ENCODE measurements at regions of chr3 and their contacts with region 1.

Region 1: GRCh38 chr3:141311496-141312353 is 56.6 kb upstream of the ZBTB38 start:
- DNase-seq: peak; percentile 97
- H3K4me3 Mint-ChIP-seq: peak overlapping the region; percentile 95
- H3K27ac Mint-ChIP-seq: peak overlapping the region; percentile 98
- H3K4me1 Mint-ChIP-seq: peaks cover 51% of the 10 kb centered on the region
- H3K27me3 Mint-ChIP-seq: no peaks in the 10 kb centered on the region

Region 2: DNA sequence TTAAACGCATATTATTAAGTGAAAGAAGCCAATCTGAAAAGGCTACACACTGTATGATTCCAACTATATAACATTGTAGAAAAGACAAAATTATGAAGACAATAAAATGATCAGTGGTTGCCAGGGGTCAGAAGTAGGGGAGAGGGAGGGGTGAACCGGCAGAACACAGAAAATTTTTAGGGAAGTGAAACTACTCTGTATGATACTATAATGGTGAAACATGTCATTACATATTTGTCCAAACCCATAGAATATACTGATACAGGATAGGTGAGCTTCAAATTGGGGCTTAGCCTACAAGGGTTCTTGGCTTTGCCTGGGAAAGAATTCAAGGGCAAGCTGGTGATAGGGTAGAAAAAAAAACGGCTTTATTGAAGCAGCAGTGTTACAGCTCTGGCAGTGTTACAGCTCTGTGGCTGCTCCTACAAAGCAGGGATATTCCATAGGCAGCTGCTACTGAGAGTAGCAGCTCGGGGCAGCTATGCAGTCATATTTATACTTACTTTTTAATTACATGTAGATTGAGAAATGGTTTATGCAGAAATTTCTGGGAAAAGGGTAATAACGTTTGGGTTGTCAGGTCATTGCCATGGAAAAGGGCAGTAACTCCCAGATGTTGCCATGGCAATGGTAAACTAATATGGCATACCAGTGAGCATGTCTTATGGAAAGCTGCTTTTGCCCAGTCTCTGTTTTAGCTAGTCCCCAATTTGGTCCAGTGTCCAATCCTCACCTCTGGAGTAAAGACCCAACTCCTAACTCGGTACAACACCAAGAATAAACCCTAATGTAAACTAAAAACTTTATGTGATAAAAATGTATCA is 495.1 kb before region 1 on chr3:
- intact Hi-C with region 1: no loop called
- DNase-seq: no peak
- H3K4me3 Mint-ChIP-seq: no peak overlapping the region
- H3K27ac Mint-ChIP-seq: no peak overlapping the region
- H3K4me1 Mint-ChIP-seq: no peaks in the 10 kb centered on the region
- H3K27me3 Mint-ChIP-seq: peaks cover 10% of the 10 kb centered on the region

Region 3: GRCh38 chr3:141000027-141000663 is 311.6 kb before region 1 on chr3:
- intact Hi-C with region 1: no loop called
- DNase-seq: peak; percentile 29
- H3K4me3 Mint-ChIP-seq: no peak overlapping the region
- H3K27ac Mint-ChIP-seq: no peak overlapping the region
- H3K4me1 Mint-ChIP-seq: peaks cover 5% of the 10 kb centered on the region
- H3K27me3 Mint-ChIP-seq: peaks cover 5% of the 10 kb centered on the region

Region 4: DNA sequence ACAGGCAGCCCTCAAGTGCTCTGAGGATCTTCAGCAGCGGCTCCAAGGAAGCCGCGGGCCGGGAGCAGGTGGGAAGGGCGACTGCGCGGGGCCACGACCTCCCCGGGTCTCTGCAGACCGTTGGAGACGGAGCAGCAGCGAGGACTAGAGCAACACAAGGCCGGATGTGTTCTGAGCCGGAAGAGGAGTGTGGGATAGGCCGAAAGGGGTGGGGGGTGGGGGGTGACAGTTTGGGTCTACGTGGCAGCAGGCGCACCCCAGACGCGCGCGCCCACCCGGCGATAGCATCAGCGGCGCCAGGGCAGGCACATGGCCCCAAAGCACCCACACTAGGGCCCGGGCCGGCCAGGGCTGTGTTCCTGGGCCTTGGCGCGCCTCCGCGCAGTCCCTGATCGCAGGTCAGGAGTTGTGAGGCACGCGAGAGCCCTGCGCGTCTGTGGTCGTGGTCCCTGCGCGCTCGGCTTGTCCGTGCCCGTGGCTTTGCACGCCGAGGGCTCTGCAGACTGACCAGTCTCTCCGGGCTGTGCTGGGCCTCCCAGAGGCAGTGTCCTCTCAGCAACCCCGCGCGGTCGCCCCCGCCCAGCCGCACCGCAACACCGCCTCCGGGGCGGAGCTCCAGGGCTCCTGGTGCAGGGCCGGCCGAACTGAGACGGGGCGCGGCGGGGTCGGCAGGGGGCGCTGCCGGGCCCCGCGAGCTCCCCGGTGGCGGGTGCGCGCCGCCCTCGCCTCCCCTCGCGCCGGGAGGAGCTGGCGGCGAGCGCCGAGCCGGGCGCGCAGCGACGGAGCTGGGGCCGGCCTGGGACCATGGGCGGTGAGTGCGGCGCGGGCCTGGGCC is 80.4 kb before region 1 on chr3 and contains the start of gene PXYLP1:
- intact Hi-C with region 1: loop called (anchors 1 kb)
- DNase-seq: peak; percentile 92
- H3K4me3 Mint-ChIP-seq: peak within 1 kb of the TSS; percentile 92
- H3K27ac Mint-ChIP-seq: peak within 1 kb of the TSS; percentile 98
- H3K4me1 Mint-ChIP-seq: peaks cover 54% of the 10 kb centered on the region
- H3K27me3 Mint-ChIP-seq: peaks cover 4% of the 10 kb centered on the region
- total RNA-seq, gene PXYLP1: 11.6 and 12.1 TPM in 2 replicates

Region 5: DNA sequence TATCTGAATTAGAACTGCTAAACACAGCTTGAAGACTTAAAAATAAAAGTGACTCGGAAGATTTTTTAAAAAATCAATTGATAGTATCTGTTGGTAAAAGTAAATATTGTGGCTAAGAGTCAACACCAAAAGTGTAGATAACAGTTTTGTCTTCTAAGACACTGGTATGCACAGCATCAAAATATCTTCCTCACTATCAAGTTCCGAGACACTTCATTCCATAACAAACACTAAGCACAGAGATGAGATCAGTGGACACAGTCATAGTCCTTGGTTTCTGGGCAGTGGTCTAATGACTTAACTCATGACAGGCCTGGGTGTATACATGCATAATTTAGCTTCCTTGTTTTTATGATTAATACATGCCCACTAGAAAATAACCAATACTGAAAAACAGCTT is 16.9 kb before region 1 on chr3:
- intact Hi-C with region 1: no loop called
- DNase-seq: no peak
- H3K4me3 Mint-ChIP-seq: peak overlapping the region; percentile 74
- H3K27ac Mint-ChIP-seq: peak overlapping the region; percentile 18
- H3K4me1 Mint-ChIP-seq: peaks cover 20% of the 10 kb centered on the region
- H3K27me3 Mint-ChIP-seq: peaks cover under 1% of the 10 kb centered on the region

Region 6: GRCh38 chr3:141360888-141361598 is 49.3 kb after region 1 on chr3:
- intact Hi-C with region 1: loop called (anchors 1 kb)
- DNase-seq: no peak
- H3K4me3 Mint-ChIP-seq: no peak overlapping the region
- H3K27ac Mint-ChIP-seq: no peak overlapping the region
- H3K4me1 Mint-ChIP-seq: peaks cover 10% of the 10 kb centered on the region
- H3K27me3 Mint-ChIP-seq: peaks cover 20% of the 10 kb centered on the region

Region 7: GRCh38 chr3:141412087-141412935 is 100.6 kb after region 1 on chr3:
- intact Hi-C with region 1: loop called (anchors 1 kb)
- DNase-seq: peak; percentile 55
- H3K4me3 Mint-ChIP-seq: peak overlapping the region; percentile 85
- H3K27ac Mint-ChIP-seq: peak overlapping the region; percentile 98
- H3K4me1 Mint-ChIP-seq: peaks cover 61% of the 10 kb centered on the region
- H3K27me3 Mint-ChIP-seq: no peaks in the 10 kb centered on the region

Region 8: DNA sequence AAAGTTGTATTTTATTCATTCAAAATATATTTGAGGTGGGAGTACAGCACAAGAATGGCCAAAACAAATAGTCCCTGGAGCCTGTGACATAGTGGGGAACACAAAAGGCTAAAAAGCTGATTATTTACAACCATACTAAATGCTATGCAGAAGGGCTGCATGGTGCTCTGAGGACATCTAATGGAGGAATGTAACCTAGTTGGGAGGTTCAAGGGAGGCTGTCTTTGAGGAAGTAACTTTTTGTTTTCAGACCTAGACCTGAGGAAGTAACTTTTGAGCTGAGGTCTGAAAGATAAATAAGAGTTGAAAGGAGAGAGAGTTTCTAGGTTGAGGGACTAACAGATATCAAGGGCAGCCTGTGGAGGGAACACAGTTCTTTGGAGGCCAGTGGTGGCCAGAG is 140.3 kb after region 1 on chr3:
- intact Hi-C with region 1: loop called (anchors 1 kb)
- DNase-seq: peak; percentile 26
- H3K4me3 Mint-ChIP-seq: no peak overlapping the region
- H3K27ac Mint-ChIP-seq: no peak overlapping the region
- H3K4me1 Mint-ChIP-seq: peaks cover 18% of the 10 kb centered on the region
- H3K27me3 Mint-ChIP-seq: no peaks in the 10 kb centered on the region

Region 9: GRCh38 chr3:141796081-141796888 is 484.6 kb after region 1 on chr3:
- intact Hi-C with region 1: loop called (anchors 1 kb)
- DNase-seq: peak; percentile 74
- H3K4me3 Mint-ChIP-seq: peak overlapping the region; percentile 79
- H3K27ac Mint-ChIP-seq: peak overlapping the region; percentile 99
- H3K4me1 Mint-ChIP-seq: peaks cover 47% of the 10 kb centered on the region
- H3K27me3 Mint-ChIP-seq: peaks cover 3% of the 10 kb centered on the region

Region 10: DNA sequence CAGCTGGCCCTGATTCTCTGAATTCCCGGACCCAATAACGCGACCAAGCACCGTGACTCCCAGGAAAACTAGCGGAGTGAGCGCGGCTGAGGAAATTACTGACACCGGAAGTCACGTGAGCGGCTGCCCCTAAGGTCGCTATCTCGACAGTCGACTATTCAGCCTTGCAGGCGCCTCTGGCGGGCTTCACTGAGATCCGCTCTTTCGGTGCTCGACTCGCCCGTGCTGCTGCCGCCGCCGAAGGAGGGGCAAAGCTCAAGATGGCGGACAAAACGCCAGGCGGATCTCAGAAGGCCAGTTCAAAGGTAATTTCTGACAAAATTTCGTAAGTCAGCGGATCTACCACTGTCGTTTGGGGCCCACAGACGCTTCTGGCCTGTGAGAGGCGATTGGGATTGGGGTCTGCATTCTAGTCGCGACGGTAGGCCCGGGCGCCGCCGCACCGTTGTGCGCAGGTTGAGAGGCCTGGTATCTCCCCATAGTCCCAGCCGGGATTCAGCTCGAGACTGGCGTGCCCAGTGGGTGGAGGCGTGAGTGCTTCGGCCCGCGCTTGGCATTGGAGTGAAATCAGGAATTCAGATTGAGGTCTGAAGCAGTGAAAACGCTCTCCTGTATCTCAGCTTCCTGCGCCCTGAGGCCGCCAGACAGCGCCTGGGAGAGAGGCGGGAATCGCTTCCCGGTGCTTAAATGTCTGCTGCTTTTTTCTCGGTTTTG is 1689.8 kb after region 1 on chr3 and contains the start of gene U2SURP:
- intact Hi-C with region 1: loop called (anchors 1 kb)
- DNase-seq: peak; percentile 91
- H3K4me3 Mint-ChIP-seq: peak within 1 kb of the TSS; percentile 95
- H3K27ac Mint-ChIP-seq: peak within 1 kb of the TSS; percentile 96
- H3K4me1 Mint-ChIP-seq: peaks cover 45% of the 10 kb centered on the region
- H3K27me3 Mint-ChIP-seq: peaks cover 6% of the 10 kb centered on the region
- total RNA-seq, gene U2SURP: 186 and 205 TPM in 2 replicates